Activated CD8-positive, alpha-beta T cell treated with anti-CD3 and anti-CD28 coated beads, Interleukin-2, amount 10 ng/mL, durations not matched to agents 7 days and 5 days (primary cell): ENCODE measurements at regions of chr2 and their contacts with region 1.

Region 1: DNA sequence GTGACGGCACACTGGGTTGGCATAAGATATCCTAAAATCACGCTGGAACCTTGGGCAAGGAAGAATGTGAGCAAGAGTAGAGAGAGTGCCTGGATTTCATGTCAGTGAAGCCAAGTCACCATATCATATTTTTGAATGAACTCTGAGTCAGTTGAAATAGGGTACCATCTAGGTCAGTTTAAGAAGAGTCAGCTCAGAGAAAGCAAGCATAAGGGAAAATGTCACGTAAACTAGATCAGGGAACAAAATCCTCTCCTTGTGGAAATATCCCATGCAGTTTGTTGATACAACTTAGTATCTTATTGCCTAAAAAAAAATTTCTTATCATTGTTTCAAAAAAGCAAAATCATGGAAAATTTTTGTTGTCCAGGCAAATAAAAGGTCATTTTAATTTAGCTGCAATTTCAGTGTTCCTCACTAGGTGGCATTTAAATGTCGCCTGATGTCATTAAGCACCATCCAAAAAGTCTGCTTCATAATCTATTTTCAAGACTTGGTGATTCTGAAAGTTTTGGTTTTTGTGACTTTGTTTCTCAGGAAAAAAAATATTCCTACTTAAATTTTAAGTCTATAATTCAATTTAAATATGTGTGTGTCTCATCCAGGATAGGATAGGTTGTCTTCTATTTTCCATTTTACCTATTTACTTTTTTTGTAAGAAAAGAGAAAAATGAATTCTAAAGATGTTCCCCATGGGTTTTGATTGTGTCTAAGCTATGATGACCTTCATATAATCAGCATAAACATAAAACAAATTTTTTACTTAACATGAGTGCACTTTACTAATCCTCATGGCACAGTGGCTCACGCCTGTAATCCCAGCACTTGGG is 19.6 kb downstream of the RSAD2 start:
- DNase-seq: no peak
- ATAC-seq: peak; percentile 64
- H3K4me3 Mint-ChIP-seq: no peak overlapping the region
- H3K27ac Mint-ChIP-seq: peak overlapping the region; percentile 78
- H3K4me1 Mint-ChIP-seq: peaks cover 33% of the 10 kb centered on the region
- H3K27me3 Mint-ChIP-seq: no peaks in the 10 kb centered on the region

Region 2: GRCh38 chr2:6860296-6860695 is 36.8 kb before region 1 on chr2:
- CTCF ChIA-PET with region 1: interaction called, 11 read pairs
- POLR2A ChIA-PET with region 1: interaction called, 15 read pairs
- DNase-seq: no peak
- ATAC-seq: no peak
- H3K4me3 Mint-ChIP-seq: no peak overlapping the region
- H3K27ac Mint-ChIP-seq: peak overlapping the region; percentile 56
- H3K4me1 Mint-ChIP-seq: peaks cover 80% of the 10 kb centered on the region
- H3K27me3 Mint-ChIP-seq: no peaks in the 10 kb centered on the region

Region 3: DNA sequence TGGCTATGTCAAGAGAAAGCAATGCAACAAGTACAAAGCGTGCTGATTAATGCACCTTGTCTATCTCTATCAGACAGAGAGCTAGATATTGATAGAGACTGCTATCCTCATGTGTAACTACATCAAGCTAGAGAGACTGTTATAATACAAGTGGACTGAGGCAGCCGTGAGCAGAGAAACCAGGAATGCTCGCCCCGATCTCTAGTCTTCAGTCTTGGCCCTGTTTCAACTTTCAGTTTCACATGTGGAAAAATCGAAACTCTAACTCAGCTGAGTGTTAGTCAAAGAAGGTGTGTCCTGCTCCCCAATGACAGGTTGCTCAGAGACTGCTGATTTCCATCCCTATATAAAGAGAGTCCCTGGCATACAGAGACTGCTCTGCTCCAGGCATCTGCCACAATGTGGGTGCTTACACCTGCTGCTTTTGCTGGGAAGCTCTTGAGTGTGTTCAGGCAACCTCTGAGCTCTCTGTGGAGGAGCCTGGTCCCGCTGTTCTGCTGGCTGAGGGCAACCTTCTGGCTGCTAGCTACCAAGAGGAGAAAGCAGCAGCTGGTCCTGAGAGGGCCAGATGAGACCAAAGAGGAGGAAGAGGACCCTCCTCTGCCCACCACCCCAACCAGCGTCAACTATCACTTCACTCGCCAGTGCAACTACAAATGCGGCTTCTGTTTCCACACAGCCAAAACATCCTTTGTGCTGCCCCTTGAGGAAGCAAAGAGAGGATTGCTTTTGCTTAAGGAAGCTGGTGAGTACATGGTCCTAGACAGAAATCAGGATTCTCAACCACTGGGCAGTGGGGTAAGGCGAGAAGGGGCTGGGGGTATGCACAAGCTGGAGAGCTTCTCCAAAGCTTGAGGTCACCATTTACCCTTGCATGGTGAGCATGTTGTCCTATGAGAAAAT is 19.5 kb before region 1 on chr2 and contains the start of gene RSAD2:
- CTCF ChIA-PET with region 1: interaction called, 56 read pairs
- POLR2A ChIA-PET with region 1: interaction called, 3 read pairs
- DNase-seq: peak; percentile 71
- ATAC-seq: peak; percentile 85
- H3K4me3 Mint-ChIP-seq: peak within 1 kb of the TSS; percentile 94
- H3K27ac Mint-ChIP-seq: peak within 1 kb of the TSS; percentile 94
- H3K4me1 Mint-ChIP-seq: peaks cover 57% of the 10 kb centered on the region
- H3K27me3 Mint-ChIP-seq: no peaks in the 10 kb centered on the region
- total RNA-seq, gene RSAD2: 72.4 to 74.5 TPM

Region 4: GRCh38 chr2:6909431-6910385 is 12.6 kb after region 1 on chr2:
- CTCF ChIA-PET with region 1: interaction called, 135 read pairs
- POLR2A ChIA-PET with region 1: interaction called, 5 read pairs
- DNase-seq: peak; percentile 87
- ATAC-seq: peak; percentile 76
- H3K4me3 Mint-ChIP-seq: peak overlapping the region; percentile 41
- H3K27ac Mint-ChIP-seq: peak overlapping the region; percentile 93
- H3K4me1 Mint-ChIP-seq: peaks cover 89% of the 10 kb centered on the region
- H3K27me3 Mint-ChIP-seq: no peaks in the 10 kb centered on the region

Region 5: DNA sequence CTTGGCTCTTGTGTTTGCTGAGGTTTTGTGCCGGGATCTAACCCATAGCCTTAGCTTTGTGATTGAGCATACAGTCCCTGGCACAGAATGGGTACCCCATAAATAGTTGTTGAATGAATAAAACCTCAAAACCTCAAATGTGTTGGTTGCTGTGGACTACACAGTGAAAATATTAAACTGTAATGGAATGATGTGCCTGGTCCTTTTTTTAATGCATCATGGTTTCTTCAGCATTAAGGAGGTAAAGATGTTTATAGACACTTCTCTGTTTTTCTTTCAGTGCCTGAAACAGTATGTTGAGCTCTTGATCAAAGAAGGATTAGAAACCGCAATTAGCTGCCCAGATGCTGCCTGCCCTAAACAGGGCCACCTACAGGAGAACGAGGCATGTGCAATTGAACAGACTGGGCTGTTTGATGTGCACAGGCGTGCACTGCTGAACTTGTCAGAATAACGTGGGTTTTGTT is 117.1 kb after region 1 on chr2:
- CTCF ChIA-PET with region 1: interaction called, 37 read pairs
- POLR2A ChIA-PET with region 1: no interaction called
- DNase-seq: peak; percentile 32
- ATAC-seq: peak; percentile 54
- H3K4me3 Mint-ChIP-seq: no peak overlapping the region
- H3K27ac Mint-ChIP-seq: no peak overlapping the region
- H3K4me1 Mint-ChIP-seq: peaks cover 12% of the 10 kb centered on the region
- H3K27me3 Mint-ChIP-seq: no peaks in the 10 kb centered on the region